Activated CD4-positive, alpha-beta T cell treated with anti-CD3 and anti-CD28 coated beads, Interleukin-2, amount 10 ng/mL, durations not matched to agents 7 days and 5 days (primary cell): ENCODE measurements at regions of chr3 and their contacts with region 1.

Region 1: DNA sequence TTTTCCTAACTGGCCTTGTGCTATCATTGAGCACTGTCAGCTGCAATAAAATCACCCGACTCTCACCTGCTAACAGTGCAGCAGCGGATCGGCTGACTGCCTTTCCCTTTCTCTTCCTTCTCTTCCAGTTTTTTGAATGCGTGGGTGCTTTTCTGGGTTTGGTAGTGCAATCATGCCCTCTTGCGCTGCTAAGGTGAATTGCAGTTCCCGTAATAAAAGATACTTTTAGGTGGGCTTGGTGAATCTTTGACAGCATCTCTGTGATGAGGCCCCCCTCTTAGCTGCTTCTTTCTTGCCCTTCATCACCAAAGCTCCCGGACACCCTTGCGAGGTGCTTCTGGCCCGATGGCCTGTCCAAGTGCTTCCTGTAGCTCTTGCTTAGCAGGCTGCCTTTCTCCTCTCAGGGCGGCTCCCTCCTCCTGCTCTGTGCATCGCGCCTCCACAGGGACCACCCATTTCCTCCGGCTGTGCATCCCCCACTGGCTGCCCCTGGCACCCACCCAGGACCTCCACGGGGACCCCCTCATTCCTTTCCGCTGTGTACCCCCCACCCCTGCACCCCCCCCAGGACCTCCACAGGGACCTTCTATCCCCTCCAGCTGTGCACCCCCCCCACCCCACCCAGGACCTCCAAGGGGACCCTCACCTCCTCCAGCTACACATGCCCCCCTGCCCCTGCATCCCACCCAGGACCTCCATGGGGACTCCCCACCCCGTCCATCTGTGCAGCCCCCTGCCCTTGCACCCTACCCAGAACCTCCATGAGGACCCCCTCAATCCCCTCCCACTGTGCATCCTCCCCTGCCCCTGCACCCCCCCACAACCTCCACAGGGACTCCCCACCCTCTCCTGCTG is 50.8 kb upstream of the RPL32 start:
- DNase-seq: peak; percentile 49
- H3K4me3 Mint-ChIP-seq: no peak overlapping the region
- H3K27ac Mint-ChIP-seq: no peak overlapping the region
- H3K4me1 Mint-ChIP-seq: peaks cover 13% of the 10 kb centered on the region
- H3K27me3 Mint-ChIP-seq: peaks cover 30% of the 10 kb centered on the region

Region 2: GRCh38 chr3:12648384-12648959 is 243.7 kb before region 1 on chr3:
- CTCF ChIA-PET with region 1: no interaction called
- POLR2A ChIA-PET with region 1: no interaction called
- DNase-seq: no peak
- H3K4me3 Mint-ChIP-seq: no peak overlapping the region
- H3K27ac Mint-ChIP-seq: no peak overlapping the region
- H3K4me1 Mint-ChIP-seq: peaks cover 22% of the 10 kb centered on the region
- H3K27me3 Mint-ChIP-seq: no peaks in the 10 kb centered on the region

Region 3: DNA sequence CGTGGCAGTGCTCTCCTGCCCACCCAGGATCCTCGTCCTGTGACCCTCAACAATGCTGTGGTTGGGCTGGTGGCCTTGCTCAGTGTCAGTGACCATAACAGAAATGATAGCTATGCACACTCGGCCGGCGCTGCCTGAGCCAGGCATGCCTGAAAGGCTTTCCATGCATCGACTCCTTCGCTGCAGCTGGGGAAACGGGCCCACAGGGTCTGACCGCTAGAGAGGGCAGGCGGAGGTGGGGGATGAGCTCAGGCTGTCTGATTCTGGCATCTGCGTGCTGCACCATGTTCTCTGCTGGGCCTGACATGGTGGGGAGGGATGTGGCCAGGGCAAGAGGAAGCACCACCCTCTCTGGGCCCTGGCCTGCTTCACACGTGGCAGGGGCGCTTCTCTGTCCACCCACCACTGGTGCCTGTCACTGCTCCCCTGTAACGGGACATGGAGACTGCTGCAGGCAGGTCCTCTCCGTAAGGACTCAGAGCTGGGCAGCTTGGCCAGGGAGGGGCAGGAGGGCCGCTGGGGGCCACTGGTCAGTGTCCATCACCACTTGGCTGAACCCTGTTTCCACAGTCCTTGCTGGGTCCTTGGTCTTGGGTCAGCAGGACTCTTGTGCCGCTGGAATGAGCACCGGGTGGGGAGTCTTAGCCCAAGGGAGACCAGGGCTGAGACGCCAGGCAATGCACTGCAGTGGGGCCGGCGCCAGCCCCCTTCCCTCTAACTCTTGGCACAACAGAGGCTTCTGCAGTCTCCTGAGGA is 13.3 kb after region 1 on chr3:
- CTCF ChIA-PET with region 1: interaction called, 19 read pairs
- POLR2A ChIA-PET with region 1: no interaction called
- DNase-seq: no peak
- H3K4me3 Mint-ChIP-seq: no peak overlapping the region
- H3K27ac Mint-ChIP-seq: no peak overlapping the region
- H3K4me1 Mint-ChIP-seq: peaks cover 3% of the 10 kb centered on the region
- H3K27me3 Mint-ChIP-seq: no peaks in the 10 kb centered on the region